BJ (cell line): ENCODE measurements at regions of chr14 and their contacts with region 1.

Region 1: DNA sequence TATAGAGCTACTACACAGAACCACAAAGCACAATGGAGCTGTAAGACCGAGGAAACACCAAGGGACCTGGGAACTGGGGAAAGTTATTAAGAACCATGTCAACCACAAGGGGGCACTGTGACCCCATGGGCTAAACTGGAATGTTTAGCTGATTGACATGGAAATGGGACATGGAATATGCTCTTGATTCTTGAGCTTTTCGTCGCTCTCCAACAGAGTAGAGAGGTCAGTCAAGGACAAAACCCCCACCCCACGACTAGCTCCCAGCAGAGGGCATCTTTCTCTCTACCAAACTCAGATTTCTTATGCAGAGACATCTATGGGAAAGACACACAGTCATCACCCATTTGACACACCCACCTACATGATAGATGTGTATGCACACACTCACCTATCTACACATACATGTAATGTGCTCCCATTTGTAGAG is 10.1 kb downstream of the NDRG2 start:
- DNase-seq: no peak
- H3K4me3 ChIP-seq: no peak overlapping the region
- H3K27me3 ChIP-seq: peaks cover 3% of the 10 kb centered on the region; the same call in 1 of the 2 replicates
- CTCF ChIP-seq: peak; percentile 88

Region 2: GRCh38 chr14:20989572-20990551 is 24.9 kb before region 1 on chr14 and contains the start of gene METTL17:
- CTCF ChIA-PET with region 1: interaction called, 14 read pairs
- POLR2A ChIA-PET with region 1: no interaction called
- DNase-seq: peak; percentile 94
- H3K4me3 ChIP-seq: peak within 1 kb of the TSS; percentile 91
- H3K27me3 ChIP-seq: no peaks in the 10 kb centered on the region
- CTCF ChIP-seq: peak; percentile 48
- polyA plus RNA-seq, gene METTL17: 49.8 and 56.2 TPM in 2 replicates

Region 3: GRCh38 chr14:21003788-21004346 is 10.9 kb before region 1 on chr14:
- CTCF ChIA-PET with region 1: interaction called, 82 read pairs
- POLR2A ChIA-PET with region 1: interaction called, 3 read pairs
- DNase-seq: no peak
- H3K4me3 ChIP-seq: no peak overlapping the region
- H3K27me3 ChIP-seq: no peaks in the 10 kb centered on the region
- CTCF ChIP-seq: no peak

Region 4: GRCh38 chr14:21032326-21033132 is 17.8 kb after region 1 on chr14:
- CTCF ChIA-PET with region 1: interaction called, 29 read pairs
- POLR2A ChIA-PET with region 1: no interaction called
- DNase-seq: no peak
- H3K4me3 ChIP-seq: no peak overlapping the region
- H3K27me3 ChIP-seq: peaks cover 14% of the 10 kb centered on the region
- CTCF ChIP-seq: no peak

Region 5: GRCh38 chr14:21049271-21049673 is 34.5 kb after region 1 on chr14:
- CTCF ChIA-PET with region 1: interaction called, 202 read pairs
- POLR2A ChIA-PET with region 1: no interaction called
- DNase-seq: no peak
- H3K4me3 ChIP-seq: no peak overlapping the region
- H3K27me3 ChIP-seq: peaks cover 2% of the 10 kb centered on the region; the same call in 1 of the 2 replicates
- CTCF ChIP-seq: no peak

Region 6: DNA sequence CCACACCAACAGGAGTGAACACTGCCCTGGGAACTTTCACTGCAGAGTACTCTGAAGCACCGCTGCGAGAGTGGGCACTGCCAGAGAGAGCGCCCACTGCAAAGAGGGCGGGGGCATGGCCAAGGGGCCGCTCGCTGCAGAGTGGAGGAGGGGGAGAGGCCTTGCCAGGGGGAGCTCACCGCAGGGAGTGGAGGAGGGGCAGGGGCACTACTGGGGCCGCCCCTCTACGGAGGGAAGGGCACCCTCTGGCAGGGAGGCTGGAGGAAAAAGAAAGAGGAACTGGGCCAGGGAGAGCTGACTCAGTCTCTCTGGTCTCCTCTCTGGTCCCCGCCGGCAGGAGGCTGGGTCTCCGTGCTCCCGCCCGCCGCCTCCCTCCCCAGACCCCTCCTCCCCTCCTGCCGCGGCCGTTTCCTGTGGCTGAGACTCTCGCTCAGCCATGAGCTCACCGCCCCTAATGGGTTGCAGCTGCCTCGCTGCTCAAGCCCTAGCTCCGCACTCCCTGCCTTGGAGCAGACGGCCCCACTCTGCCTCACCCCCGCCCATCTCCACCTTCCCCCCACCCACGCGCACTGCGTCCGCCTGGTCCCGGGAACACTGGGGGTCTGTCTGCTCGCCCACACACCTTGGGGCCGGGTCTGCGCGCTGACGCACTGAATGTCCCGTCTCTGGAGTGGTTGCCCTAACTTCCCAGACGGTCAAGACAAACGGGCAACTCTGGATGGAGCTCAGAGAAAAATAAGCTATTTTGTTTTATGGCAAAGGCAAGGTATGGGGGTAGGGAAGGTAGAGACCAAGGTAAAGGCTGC is 56.7 kb after region 1 on chr14:
- CTCF ChIA-PET with region 1: interaction called, 35 read pairs
- POLR2A ChIA-PET with region 1: no interaction called
- DNase-seq: peak; percentile 71
- H3K4me3 ChIP-seq: peak overlapping the region; percentile 79
- H3K27me3 ChIP-seq: no peaks in the 10 kb centered on the region
- CTCF ChIP-seq: 0 out of 2 replicates have a peak, but pooled peaks have one; percentile 8

Region 7: DNA sequence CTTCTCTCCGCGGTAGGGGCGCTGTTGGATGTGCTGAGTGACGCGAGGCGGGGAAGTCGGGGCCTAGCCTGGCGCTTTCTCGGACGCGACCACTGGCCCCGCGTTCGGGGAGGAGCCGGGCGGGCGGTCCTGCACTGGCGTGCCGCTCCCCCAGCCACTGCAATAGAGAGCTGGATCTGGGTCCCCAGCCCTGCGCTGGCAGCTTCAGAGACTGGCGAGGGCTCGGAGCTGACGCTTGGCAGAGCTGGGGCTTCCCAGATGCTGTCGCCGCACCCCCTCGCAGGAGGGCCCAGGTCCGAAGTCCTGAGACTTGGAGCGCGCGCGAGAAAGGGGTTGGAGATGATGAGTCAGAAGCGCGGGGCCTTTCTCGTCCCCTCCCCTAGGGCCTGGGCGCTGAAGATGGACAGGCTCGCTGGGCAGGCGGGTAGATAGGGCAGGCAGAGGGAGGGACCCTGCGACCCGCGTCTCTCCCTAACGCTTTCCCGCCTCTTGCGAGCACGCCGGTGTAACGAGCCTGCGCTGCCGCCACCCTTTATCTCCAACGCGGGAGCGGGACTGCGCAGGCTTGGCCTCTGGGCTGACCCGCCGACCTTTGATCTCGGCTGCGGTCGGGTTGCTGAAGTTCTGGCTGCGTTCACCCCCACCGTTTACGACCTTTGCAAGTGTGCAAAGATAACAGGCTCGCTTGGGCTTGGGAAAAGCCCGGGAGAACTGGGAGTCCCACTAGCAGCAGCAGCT is 89.1 kb after region 1 on chr14:
- CTCF ChIA-PET with region 1: interaction called, 233 read pairs
- POLR2A ChIA-PET with region 1: no interaction called
- DNase-seq: peak; percentile 67
- H3K4me3 ChIP-seq: peak overlapping the region; percentile 69
- H3K27me3 ChIP-seq: 0 out of 2 replicates have a peak, but pooled peaks cover 1% of the 10 kb centered on the region
- CTCF ChIP-seq: peak; percentile 89

Region 8: GRCh38 chr14:21121106-21121505 is 106.3 kb after region 1 on chr14:
- CTCF ChIA-PET with region 1: no interaction called
- POLR2A ChIA-PET with region 1: no interaction called
- DNase-seq: no peak
- H3K4me3 ChIP-seq: no peak overlapping the region
- H3K27me3 ChIP-seq: no peaks in the 10 kb centered on the region
- CTCF ChIP-seq: no peak